GM23248 (cell line): ENCODE measurements at regions of chr20 and their contacts with region 1.

Region 1: DNA sequence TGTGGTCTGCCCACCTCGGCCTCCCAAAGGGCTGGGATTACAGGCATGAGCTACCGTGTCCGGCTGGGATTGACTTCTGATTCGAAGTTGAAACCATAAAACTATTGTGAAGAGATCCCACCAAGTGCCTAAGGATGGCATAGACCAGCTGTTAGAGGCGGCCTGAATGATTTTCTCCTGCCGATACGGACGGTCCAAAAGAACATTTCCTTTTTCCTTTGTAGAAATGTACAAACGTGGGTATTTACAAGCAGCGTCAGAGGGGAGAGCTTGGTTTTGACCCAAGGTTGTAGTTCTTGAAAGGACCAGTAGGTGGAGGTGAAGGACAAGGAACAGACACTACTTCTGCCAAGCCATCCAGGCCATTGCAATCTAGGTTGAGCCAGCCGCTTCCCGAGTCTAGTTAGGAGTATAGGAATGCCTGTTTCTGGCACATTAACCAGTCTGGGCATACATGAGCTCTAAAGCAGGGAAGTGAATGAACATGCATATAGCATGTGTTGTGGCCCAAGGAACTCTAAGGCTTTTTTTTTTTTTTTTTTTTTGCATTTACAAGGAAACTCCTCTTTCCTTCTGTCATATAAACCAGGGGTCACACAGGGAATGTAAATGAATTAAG is 29.1 kb downstream of the MOCS3 start:
- DNase-seq: peak; percentile 89
- H3K4me3 ChIP-seq: 0 out of 2 replicates have a peak overlapping the region, but pooled peaks have one; percentile 21
- H3K27ac ChIP-seq: no peak overlapping the region
- H3K4me1 ChIP-seq: peaks cover under 1% of the 10 kb centered on the region; the same call in 1 of the 2 replicates
- H3K27me3 ChIP-seq: no peaks in the 10 kb centered on the region

Region 2: GRCh38 chr20:51029963-51030920 is 42.5 kb after region 1 on chr20:
- in situ Hi-C with region 1: no loop called
- DNase-seq: peak; percentile 67
- H3K4me3 ChIP-seq: peak overlapping the region; percentile 28
- H3K27ac ChIP-seq: peak overlapping the region; percentile 24
- H3K4me1 ChIP-seq: peaks cover 34% of the 10 kb centered on the region
- H3K27me3 ChIP-seq: 0 out of 2 replicates have a peak, but pooled peaks cover 7% of the 10 kb centered on the region

Region 3: DNA sequence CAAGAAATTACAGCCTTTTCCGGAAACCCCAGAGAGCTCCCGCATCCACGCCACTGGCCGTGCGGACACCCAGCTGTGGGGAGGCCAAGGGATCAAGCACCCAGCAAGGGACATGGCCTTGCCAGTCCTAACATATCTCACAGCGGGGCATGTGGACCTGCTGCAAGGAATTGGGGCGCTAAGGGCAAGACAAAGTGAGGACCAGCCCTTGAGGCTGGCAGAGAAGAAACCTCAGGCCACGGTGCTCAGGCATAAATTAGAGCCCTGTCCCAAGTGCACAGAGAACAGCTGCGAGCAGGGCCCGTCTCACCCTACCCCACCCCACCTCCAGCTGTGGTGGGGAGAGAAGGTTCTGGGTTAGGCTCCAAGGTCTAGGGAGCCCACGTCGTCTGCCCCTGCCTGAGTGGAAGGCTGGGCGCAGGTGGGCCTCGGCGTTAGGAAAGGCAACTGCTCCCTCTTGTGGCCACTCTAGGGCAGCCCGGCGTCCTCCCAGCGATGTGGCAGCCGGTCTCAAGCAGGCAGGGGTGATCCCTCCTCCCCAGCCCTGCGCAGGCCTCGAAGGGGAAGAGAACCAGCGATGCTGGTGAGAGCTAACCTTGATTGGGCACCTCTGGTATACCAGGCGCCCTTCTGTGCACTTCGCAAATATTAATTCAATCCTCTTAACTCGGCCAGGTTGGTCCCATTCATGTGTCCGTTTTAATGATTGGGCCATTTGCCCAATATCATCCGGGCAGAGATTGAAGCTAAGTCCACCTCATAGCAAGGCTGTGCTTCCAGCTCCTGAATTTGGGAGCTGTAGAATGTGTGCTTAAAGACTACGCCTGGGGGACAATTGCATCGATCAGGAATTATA is 319.0 kb after region 1 on chr20:
- in situ Hi-C with region 1: loop called (anchors 5 kb)
- DNase-seq: peak; percentile 84
- H3K4me3 ChIP-seq: no peak overlapping the region
- H3K27ac ChIP-seq: no peak overlapping the region
- H3K4me1 ChIP-seq: no peaks in the 10 kb centered on the region
- H3K27me3 ChIP-seq: no peaks in the 10 kb centered on the region

Region 4: GRCh38 chr20:51595058-51595532 is 607.4 kb after region 1 on chr20:
- in situ Hi-C with region 1: loop called (anchors 10 kb)
- DNase-seq: peak; percentile 94
- H3K4me3 ChIP-seq: 0 out of 2 replicates have a peak overlapping the region, but pooled peaks have one; percentile 14
- H3K27ac ChIP-seq: no peak overlapping the region
- H3K4me1 ChIP-seq: 0 out of 2 replicates have a peak, but pooled peaks cover 5% of the 10 kb centered on the region
- H3K27me3 ChIP-seq: no peaks in the 10 kb centered on the region

Region 5: GRCh38 chr20:51797357-51798028 is 809.8 kb after region 1 on chr20:
- in situ Hi-C with region 1: loop called (anchors 25 kb)
- DNase-seq: no peak
- H3K4me3 ChIP-seq: no peak overlapping the region
- H3K27ac ChIP-seq: no peak overlapping the region
- H3K4me1 ChIP-seq: no peaks in the 10 kb centered on the region
- H3K27me3 ChIP-seq: peaks cover 36% of the 10 kb centered on the region